ENCODE measurements at regions of chr11 and their contacts with region 1.

Region 1: DNA sequence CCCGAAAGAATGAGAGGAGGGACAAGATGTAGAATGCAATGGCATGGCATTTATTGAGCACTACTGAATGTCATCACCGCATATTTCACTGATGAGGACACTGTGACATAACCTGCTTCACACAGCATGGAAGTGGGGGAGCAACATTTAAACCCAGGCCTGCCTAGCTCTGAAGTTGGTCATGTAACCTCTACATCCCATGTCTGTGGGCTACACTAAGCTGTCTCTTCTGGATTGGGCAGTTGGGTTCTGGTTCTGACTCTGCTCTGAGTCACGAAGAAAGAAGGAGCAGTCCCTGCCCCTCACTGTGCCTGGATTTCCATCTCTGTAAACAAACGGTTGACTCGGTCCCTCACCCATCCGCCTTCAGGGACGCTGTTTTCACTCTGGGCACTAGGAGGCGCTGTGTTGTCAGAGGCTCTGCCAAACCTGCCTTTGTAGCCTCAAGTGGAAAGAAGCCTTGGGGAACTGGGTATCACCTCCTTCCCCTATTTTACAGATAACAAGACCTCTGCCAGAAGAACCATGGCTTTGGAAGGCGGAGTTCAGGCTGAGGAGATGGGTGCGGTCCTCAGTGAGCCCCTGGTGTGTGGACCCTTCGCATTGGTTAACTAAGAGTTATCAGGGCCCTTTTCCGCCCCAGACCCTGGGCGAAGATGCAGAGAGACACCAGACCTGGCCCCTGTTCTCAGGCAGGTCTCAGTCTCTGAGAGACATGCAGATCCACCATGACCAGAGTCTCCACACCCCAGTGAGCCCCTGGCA is 12.7 kb upstream of the ARHGEF17 start:
- DNase-seq: peak in 1 of 2 experiments; percentile 95
- H3K4me3 ChIP-seq: no peak overlapping the region
- H3K27ac ChIP-seq: no peak overlapping the region
- H3K4me1 ChIP-seq: peaks cover 0 to 4% (median 2%) of the 10 kb centered on the region in 4 experiments; a peak in 3 of 7 replicates
- H3K27me3 ChIP-seq: peaks cover 0 to 19% (median 8%) of the 10 kb centered on the region in 4 experiments; a peak in 5 of 7 replicates
- CTCF ChIP-seq: peak; percentile 93 to 100 (median 96)
- EP300 ChIP-seq: no peak
- POLR2A ChIP-seq: no peak
- RAD21 ChIP-seq: peak; percentile 68 to 76

Region 2: DNA sequence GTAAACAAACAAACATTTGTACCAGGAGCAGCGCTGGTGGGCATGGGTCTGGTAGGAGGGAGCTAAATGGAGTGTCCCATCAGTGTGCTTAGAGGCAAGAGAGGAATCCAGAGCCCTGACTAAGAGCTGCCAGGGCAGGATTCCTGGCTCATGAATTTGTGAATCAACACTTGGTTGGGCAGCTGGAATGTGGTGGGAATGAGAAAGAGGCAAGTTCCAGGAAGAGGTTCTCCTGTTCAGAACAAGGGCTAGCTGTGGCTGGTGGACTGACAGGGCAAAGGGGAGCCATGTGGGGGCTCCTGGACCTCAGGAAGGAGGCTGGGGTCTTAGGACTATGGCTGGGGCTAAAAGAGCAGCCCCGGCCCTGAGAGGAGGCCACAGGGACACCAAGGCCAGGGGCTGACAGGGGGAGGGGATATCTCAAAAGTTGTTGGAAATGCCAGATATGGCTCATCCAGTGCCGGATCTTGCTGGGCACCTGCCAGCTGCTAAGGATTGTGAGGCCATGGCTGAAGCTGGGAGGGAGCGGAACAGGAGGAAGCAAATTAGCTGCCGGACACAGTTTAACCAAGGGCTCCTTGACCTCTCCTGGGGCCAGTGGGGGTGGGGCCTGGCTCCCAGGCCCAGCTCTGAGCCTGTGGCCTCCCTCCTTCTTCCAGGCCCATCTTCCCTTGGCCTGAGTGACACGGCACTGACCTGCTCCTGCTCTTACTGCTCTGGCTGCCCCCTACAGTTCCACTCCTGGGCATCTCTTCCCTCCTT is 37.9 kb before region 1 on chr11:
- CTCF ChIA-PET with region 1: interaction called, 81 read pairs
- POLR2A ChIA-PET with region 1: no interaction called
- DNase-seq: no peak
- H3K4me3 ChIP-seq: no peak overlapping the region
- H3K27ac ChIP-seq: no peak overlapping the region
- H3K4me1 ChIP-seq: peaks cover 0 to 3% (median 1%) of the 10 kb centered on the region in 4 experiments; a peak in 1 of 7 replicates
- H3K27me3 ChIP-seq: peaks cover 0 to 2% (median 0%) of the 10 kb centered on the region in 4 experiments; a peak in 1 of 7 replicates
- CTCF ChIP-seq: no peak
- EP300 ChIP-seq: no peak
- POLR2A ChIP-seq: no peak
- RAD21 ChIP-seq: no peak

Region 3: GRCh38 chr11:73325036-73325981 is 29.9 kb after region 1 on chr11:
- CTCF ChIA-PET with region 1: interaction called, 21 read pairs
- POLR2A ChIA-PET with region 1: no interaction called
- DNase-seq: no peak
- H3K4me3 ChIP-seq: no peak overlapping the region
- H3K27ac ChIP-seq: no peak overlapping the region
- H3K4me1 ChIP-seq: peaks cover 15 to 28% (median 20%) of the 10 kb centered on the region in 4 experiments
- H3K27me3 ChIP-seq: peaks cover 0 to 16% (median 8%) of the 10 kb centered on the region in 4 experiments; a peak in 3 of 7 replicates
- CTCF ChIP-seq: no peak
- EP300 ChIP-seq: no peak
- POLR2A ChIP-seq: no peak
- RAD21 ChIP-seq: no peak

Region 4: GRCh38 chr11:73342633-73343032 is 47.2 kb after region 1 on chr11:
- CTCF ChIA-PET with region 1: interaction called, 119 read pairs
- POLR2A ChIA-PET with region 1: no interaction called
- DNase-seq: no peak
- H3K4me3 ChIP-seq: peak overlapping the region; percentile 29 to 55 (median 34); a peak in 7 of 8 replicates
- H3K27ac ChIP-seq: no peak overlapping the region
- H3K4me1 ChIP-seq: peaks cover 0 to 11% (median 9%) of the 10 kb centered on the region in 4 experiments; a peak in 6 of 7 replicates
- H3K27me3 ChIP-seq: peaks cover 7 to 44% (median 30%) of the 10 kb centered on the region in 4 experiments; a peak in 6 of 7 replicates
- CTCF ChIP-seq: peak in 2 of 3 experiments; percentile 17 to 37; a peak in 3 of 4 replicates
- EP300 ChIP-seq: no peak
- POLR2A ChIP-seq: no peak
- RAD21 ChIP-seq: no peak

Region 5: DNA sequence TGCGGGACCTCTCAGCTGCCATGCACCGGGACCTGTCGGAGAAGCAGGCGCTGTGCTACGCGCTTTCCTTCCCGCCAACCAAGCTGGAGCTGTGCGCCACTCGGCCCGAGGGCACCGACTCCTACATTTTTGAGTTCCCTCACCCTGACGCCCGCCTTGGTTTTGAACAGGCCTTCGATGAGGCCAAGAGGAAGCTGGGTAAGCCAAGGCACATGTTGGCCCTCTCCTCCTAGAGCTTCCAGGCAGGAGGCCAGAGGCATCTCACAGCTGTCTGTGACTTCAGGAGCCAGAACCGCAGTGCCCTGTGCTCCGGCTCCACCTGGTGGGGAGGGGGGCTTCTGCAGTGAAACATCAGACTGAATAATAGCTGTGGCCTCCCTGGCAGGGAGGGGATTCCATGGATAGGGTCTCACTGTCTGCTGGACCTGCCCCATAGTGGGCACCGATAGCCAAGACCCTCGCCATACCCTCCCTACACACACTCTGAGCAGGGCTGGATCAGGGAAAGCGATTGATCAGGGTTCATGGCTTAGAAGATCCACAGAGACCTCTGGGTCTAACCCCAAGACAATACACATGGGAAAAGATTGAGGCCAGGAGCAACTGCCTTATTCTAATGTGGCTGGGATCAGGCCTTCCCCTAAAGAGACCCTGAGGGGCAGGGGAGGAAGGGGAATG is 65.1 kb after region 1 on chr11:
- CTCF ChIA-PET with region 1: interaction called, 16 read pairs
- POLR2A ChIA-PET with region 1: no interaction called
- DNase-seq: peak in 1 of 2 experiments; percentile 83
- H3K4me3 ChIP-seq: no peak overlapping the region
- H3K27ac ChIP-seq: no peak overlapping the region
- H3K4me1 ChIP-seq: peaks cover 0 to 3% (median under 1%) of the 10 kb centered on the region in 4 experiments; a peak in 3 of 7 replicates
- H3K27me3 ChIP-seq: peaks cover 0 to 4% (median 2%) of the 10 kb centered on the region in 4 experiments; a peak in 4 of 7 replicates
- CTCF ChIP-seq: peak; percentile 79 to 86 (median 84)
- EP300 ChIP-seq: no peak
- POLR2A ChIP-seq: no peak
- RAD21 ChIP-seq: peak; percentile 70 to 80

Measured in H1 (cell line).